A673 (cell line): ENCODE measurements at regions of chr11 and their contacts with region 1.

Region 1: GRCh38 chr11:44911029-44911814 is 39.5 kb downstream of the TP53I11 start:
- DNase-seq: peak; percentile 98
- H3K4me3 ChIP-seq: no peak overlapping the region
- H3K27ac ChIP-seq: no peak overlapping the region
- H3K4me1 ChIP-seq: peaks cover 16% of the 10 kb centered on the region
- H3K27me3 ChIP-seq: no peaks in the 10 kb centered on the region
- CTCF ChIP-seq: peak; percentile 100

Region 2: GRCh38 chr11:44095506-44096394 is 815.5 kb before region 1 on chr11 and contains the start of gene EXT2:
- CTCF ChIA-PET with region 1: no interaction called
- POLR2A ChIA-PET with region 1: no interaction called
- intact Hi-C with region 1: loop called (anchors 10 kb)
- DNase-seq: peak; percentile 95
- H3K4me3 ChIP-seq: peak within 1 kb of the TSS; percentile 66
- H3K27ac ChIP-seq: peak within 1 kb of the TSS; percentile 72
- H3K4me1 ChIP-seq: peaks cover 16% of the 10 kb centered on the region
- H3K27me3 ChIP-seq: no peaks in the 10 kb centered on the region
- CTCF ChIP-seq: peak; percentile 100
- total RNA-seq, gene EXT2: 123 and 128 TPM in 2 replicates

Region 3: GRCh38 chr11:44556735-44557409 is 354.4 kb before region 1 on chr11:
- CTCF ChIA-PET with region 1: interaction called, 6 read pairs
- POLR2A ChIA-PET with region 1: no interaction called
- intact Hi-C with region 1: loop called (anchors 5 kb)
- DNase-seq: peak; percentile 82
- H3K4me3 ChIP-seq: no peak overlapping the region
- H3K27ac ChIP-seq: no peak overlapping the region
- H3K4me1 ChIP-seq: peaks cover 5% of the 10 kb centered on the region
- H3K27me3 ChIP-seq: no peaks in the 10 kb centered on the region
- CTCF ChIP-seq: peak; percentile 92

Region 4: DNA sequence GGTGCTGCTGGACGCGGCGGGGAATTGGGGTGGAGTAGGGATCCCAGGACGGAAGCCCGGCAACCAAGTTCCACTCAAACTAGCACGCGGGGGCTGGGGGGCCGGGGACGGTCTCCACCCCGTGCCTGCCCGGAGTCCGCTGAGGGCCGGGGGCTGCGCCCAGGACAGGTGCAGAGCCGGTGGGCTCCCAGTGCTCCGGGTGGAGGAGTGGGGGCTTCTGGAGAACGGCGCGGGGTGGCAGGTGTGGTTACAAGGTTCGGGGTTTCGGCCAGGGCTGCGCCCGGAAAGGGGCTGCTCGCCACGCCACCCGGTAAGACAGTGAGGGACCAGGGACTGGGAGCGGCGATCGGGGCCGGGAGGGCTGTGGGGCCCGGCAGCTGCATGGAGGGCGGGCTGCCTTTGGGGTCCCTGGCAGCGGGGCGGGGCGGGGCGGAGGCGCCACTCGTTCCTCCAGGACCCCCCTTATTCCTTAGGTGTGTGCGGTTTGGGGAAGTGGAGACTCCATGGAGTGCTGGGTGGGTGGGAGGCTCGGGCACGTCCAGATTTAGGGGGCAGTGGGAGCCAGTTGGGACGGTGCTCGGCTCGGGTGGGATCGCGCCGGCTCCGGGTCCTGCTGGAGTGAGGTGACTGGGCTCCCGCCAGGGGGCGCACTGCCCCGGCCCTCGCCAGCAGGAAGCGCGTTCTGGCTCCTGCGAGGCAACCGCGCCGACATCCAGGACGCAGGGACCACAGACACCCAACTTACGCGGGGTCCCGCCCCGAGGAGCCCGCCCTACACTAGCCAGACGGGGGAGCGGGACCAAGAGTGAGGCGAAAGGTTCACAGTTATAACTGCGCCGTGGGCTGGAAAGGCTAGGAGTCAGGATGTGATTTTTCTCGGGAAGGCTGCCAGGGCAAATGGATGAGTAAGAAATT is 183.6 kb before region 1 on chr11:
- CTCF ChIA-PET with region 1: interaction called, 3 read pairs
- POLR2A ChIA-PET with region 1: no interaction called
- intact Hi-C with region 1: loop called (anchors 1 kb)
- DNase-seq: peak; percentile 93
- H3K4me3 ChIP-seq: peak overlapping the region; percentile 77
- H3K27ac ChIP-seq: peak overlapping the region; percentile 44
- H3K4me1 ChIP-seq: peaks cover 37% of the 10 kb centered on the region
- H3K27me3 ChIP-seq: no peaks in the 10 kb centered on the region
- CTCF ChIP-seq: peak; percentile 100

Region 5: DNA sequence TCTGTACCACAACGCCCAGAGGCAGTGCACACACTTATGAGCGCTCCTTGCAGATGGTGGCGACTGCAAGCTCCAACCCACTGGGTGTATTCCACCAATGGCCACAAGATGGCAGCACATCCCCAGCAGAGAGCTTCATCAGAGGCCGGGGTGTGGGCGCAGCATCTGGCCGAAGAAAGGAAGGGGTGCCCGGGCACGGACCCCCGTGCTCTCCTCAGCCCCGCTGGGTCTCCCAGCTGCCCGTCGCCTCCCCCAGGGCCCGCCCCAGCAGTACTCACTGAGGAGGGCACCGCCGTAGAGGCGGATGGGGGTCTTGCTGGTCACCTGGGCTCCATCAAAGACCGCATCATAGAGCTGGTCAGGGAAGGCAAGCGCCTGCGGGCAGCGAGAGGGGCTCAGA is 25.3 kb after region 1 on chr11:
- CTCF ChIA-PET with region 1: interaction called, 11 read pairs
- POLR2A ChIA-PET with region 1: no interaction called
- intact Hi-C with region 1: no loop called
- DNase-seq: peak; percentile 93
- H3K4me3 ChIP-seq: no peak overlapping the region
- H3K27ac ChIP-seq: no peak overlapping the region
- H3K4me1 ChIP-seq: peaks cover 5% of the 10 kb centered on the region
- H3K27me3 ChIP-seq: no peaks in the 10 kb centered on the region
- CTCF ChIP-seq: peak; percentile 100